GM12878 (cell line): ENCODE measurements at regions of chr1 and their contacts with region 1.

Region 1: DNA sequence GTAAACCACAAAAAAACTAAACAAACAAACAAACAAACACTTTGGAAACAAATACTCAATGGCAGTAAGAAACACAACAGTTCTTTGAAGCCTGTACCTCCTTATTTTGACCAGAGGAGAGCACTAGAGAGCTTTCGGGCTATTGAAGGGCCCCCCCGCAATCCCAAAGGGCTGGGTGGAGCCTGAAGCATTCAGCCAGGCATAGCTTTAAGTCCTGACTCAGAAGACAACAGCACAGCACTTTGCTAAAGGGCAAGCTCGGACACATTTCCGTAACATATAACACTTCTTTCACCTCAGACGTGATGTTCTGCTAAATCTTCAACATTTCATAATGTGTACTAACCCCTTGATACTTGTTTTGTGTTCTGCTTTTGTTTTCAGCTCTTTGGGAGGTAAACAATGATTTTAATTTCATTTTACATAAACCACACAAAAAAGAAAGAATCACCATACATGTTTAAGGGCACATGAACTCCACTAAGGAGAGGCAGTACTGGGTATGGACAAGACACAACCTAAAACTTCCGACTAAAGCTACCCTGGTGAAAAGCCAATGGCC is 9.7 kb upstream of the SHCBP1L start:
- DNase-seq: peak; percentile 62
- ATAC-seq: peak; percentile 100
- H3K4me3 ChIP-seq: peak overlapping the region; percentile 57; the same call in 1 of the 2 replicates
- H3K27ac ChIP-seq: peak overlapping the region; percentile 56
- H3K4me1 ChIP-seq: 0 out of 2 replicates have a peak, but pooled peaks cover 5% of the 10 kb centered on the region
- H3K27me3 ChIP-seq: no peaks in the 10 kb centered on the region
- CTCF ChIP-seq: peak; percentile 88 to 95 (median 93)
- EP300 ChIP-seq: no peak
- POLR2A ChIP-seq: peak; percentile 48; the same call in 1 of the 2 replicates
- RAD21 ChIP-seq: peak; percentile 99

Region 2: DNA sequence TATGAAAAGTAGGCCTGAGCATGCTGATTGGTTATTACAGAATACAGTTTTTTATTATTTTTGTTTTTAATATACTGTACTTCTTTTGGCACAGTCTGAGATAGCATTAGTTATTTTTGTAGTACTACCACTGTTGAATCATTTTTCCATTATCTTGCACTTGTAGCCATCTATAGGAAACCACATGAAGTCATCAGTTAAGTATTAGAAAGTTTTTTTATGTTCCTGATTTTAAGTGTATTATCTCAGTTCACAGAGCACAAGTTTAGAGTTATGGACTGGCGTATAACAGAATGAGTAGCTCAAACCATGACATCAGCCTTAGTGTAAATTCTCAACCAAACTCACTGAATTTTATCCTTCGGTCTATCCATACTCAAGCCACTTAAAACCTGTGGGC is 100.6 kb before region 1 on chr1:
- CTCF ChIA-PET with region 1: no interaction called
- POLR2A ChIA-PET with region 1: no interaction called
- RAD21 ChIA-PET with region 1: no interaction called
- SMC1A ChIA-PET with region 1: no interaction called
- in situ Hi-C with region 1: no loop called
- intact Hi-C with region 1: no loop called
- DNase-seq: no peak
- ATAC-seq: no peak
- H3K4me3 ChIP-seq: no peak overlapping the region
- H3K27ac ChIP-seq: no peak overlapping the region
- H3K4me1 ChIP-seq: no peaks in the 10 kb centered on the region
- H3K27me3 ChIP-seq: no peaks in the 10 kb centered on the region
- CTCF ChIP-seq: no peak
- EP300 ChIP-seq: no peak
- POLR2A ChIP-seq: no peak
- RAD21 ChIP-seq: no peak

Region 3: GRCh38 chr1:182905316-182905715 is 57.3 kb before region 1 on chr1:
- CTCF ChIA-PET with region 1: no interaction called
- POLR2A ChIA-PET with region 1: no interaction called
- RAD21 ChIA-PET with region 1: no interaction called
- SMC1A ChIA-PET with region 1: no interaction called
- in situ Hi-C with region 1: no loop called
- intact Hi-C with region 1: no loop called
- DNase-seq: no peak
- ATAC-seq: no peak
- H3K4me3 ChIP-seq: no peak overlapping the region
- H3K27ac ChIP-seq: no peak overlapping the region
- H3K4me1 ChIP-seq: no peaks in the 10 kb centered on the region
- H3K27me3 ChIP-seq: no peaks in the 10 kb centered on the region
- CTCF ChIP-seq: no peak
- EP300 ChIP-seq: no peak
- POLR2A ChIP-seq: no peak
- RAD21 ChIP-seq: no peak

Region 4: DNA sequence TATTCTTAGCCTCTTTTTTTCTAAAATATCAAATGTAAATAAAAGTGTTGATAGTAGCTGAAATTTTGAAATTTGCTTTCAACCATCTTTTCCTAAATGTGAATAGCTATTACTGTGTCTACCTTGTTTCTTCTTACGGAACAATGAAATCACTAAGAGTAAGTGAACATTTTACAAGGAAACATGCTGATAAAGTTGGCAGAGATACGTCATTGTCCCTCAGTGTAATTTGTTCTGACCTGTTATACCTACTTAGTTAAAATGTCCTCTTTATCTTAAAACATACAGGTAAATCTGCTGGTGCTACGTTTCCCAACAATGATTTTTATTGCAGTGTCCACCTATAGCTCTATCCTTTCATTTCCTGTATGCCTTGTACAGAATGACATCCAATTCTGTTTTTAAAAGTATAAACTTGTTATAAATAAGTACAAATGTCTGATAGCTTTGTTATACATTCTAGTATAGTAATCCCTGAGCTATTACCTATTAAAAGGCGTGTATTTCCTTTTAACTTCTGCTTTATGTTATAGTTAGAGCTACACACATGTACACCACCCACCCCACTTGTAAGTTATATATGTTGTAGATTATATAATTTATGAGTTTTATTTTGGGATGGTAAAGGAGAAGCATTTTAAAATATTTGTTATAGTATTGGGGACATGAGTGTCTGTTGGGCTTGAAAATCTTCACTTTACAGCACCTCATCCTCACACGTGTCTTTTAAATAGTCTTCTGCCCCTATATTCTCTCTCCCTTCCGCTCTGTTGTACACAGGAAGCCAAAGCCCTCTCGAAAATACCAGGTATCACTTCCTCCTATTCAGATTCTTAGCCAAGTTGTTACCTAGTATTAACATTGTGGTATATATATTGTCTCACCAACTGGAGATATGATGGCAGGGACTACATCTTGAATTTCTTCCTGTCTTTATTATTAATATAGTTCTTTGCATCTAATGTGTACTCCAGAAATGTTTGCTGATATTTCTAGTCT is 85.8 kb after region 1 on chr1:
- CTCF ChIA-PET with region 1: interaction called, 11 read pairs
- POLR2A ChIA-PET with region 1: no interaction called
- RAD21 ChIA-PET with region 1: interaction called, 5 read pairs
- SMC1A ChIA-PET with region 1: interaction called, 16 read pairs
- in situ Hi-C with region 1: no loop called
- intact Hi-C with region 1: no loop called
- DNase-seq: peak; percentile 78
- ATAC-seq: peak; percentile 98
- H3K4me3 ChIP-seq: no peak overlapping the region
- H3K27ac ChIP-seq: peak overlapping the region; percentile 46
- H3K4me1 ChIP-seq: peaks cover 29% of the 10 kb centered on the region
- H3K27me3 ChIP-seq: no peaks in the 10 kb centered on the region
- CTCF ChIP-seq: no peak
- EP300 ChIP-seq: peak in 1 of 2 experiments; percentile 61; a peak in 1 of 4 replicates
- POLR2A ChIP-seq: no peak
- RAD21 ChIP-seq: no peak

Region 5: GRCh38 chr1:183126528-183126927 is 163.9 kb after region 1 on chr1:
- CTCF ChIA-PET with region 1: no interaction called
- POLR2A ChIA-PET with region 1: no interaction called
- RAD21 ChIA-PET with region 1: interaction called, 3 read pairs
- SMC1A ChIA-PET with region 1: interaction called, 3 read pairs
- in situ Hi-C with region 1: no loop called
- intact Hi-C with region 1: loop called (anchors 5 kb)
- DNase-seq: no peak
- ATAC-seq: no peak
- H3K4me3 ChIP-seq: no peak overlapping the region
- H3K27ac ChIP-seq: no peak overlapping the region
- H3K4me1 ChIP-seq: no peaks in the 10 kb centered on the region
- H3K27me3 ChIP-seq: no peaks in the 10 kb centered on the region
- CTCF ChIP-seq: no peak
- EP300 ChIP-seq: no peak
- POLR2A ChIP-seq: no peak
- RAD21 ChIP-seq: no peak

Region 6: DNA sequence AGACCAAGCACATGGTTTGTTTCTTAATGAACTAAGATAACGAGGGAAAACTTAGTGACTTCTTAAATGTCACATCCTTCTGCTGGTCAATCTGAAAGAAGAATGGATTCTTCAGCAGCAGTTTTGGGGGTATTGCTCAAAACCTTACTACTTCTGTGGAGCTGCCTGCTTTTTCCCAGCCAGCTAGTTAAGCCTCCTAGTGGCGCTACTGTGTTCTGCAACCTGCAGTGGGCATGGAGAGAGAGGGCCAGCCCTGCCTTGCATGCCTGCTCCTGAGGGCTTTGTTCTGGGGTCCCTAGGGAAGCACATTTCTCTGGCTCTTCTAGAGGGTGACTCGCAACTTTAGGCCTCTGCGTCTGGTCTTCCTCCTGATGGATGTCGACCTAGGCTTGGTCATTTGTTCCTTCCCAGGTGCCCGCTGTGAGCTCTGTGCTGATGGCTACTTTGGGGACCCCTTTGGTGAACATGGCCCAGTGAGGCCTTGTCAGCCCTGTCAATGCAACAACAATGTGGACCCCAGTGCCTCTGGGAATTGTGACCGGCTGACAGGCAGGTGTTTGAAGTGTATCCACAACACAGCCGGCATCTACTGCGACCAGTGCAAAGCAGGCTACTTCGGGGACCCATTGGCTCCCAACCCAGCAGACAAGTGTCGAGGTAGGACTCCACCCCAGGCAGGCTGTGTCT is 265.5 kb after region 1 on chr1:
- CTCF ChIA-PET with region 1: interaction called, 126 read pairs
- POLR2A ChIA-PET with region 1: interaction called, 3 read pairs
- RAD21 ChIA-PET with region 1: interaction called, 52 read pairs
- SMC1A ChIA-PET with region 1: interaction called, 66 read pairs
- in situ Hi-C with region 1: loop called (anchors 5 kb)
- intact Hi-C with region 1: loop called (anchors 1 kb)
- DNase-seq: no peak
- ATAC-seq: peak; percentile 96
- H3K4me3 ChIP-seq: no peak overlapping the region
- H3K27ac ChIP-seq: no peak overlapping the region
- H3K4me1 ChIP-seq: peaks cover 6% of the 10 kb centered on the region; the same call in 1 of the 2 replicates
- H3K27me3 ChIP-seq: no peaks in the 10 kb centered on the region
- CTCF ChIP-seq: peak; percentile 80 to 90 (median 86)
- EP300 ChIP-seq: no peak
- POLR2A ChIP-seq: no peak
- RAD21 ChIP-seq: peak; percentile 87

Region 7: GRCh38 chr1:183306317-183307042 is 343.8 kb after region 1 on chr1:
- CTCF ChIA-PET with region 1: interaction called, 15 read pairs
- POLR2A ChIA-PET with region 1: no interaction called
- RAD21 ChIA-PET with region 1: interaction called, 7 read pairs
- SMC1A ChIA-PET with region 1: interaction called, 4 read pairs
- in situ Hi-C with region 1: no loop called
- intact Hi-C with region 1: no loop called
- DNase-seq: no peak
- ATAC-seq: peak; percentile 75
- H3K4me3 ChIP-seq: no peak overlapping the region
- H3K27ac ChIP-seq: no peak overlapping the region
- H3K4me1 ChIP-seq: peaks cover 12% of the 10 kb centered on the region
- H3K27me3 ChIP-seq: no peaks in the 10 kb centered on the region
- CTCF ChIP-seq: peak; percentile 38 to 48 (median 48); a peak in 5 of 6 replicates
- EP300 ChIP-seq: no peak
- POLR2A ChIP-seq: no peak
- RAD21 ChIP-seq: 0 out of 2 replicates have a peak, but pooled peaks have one; percentile 6

Region 8: GRCh38 chr1:183543619-183544204 is 581.1 kb after region 1 on chr1:
- CTCF ChIA-PET with region 1: interaction called, 3 read pairs
- POLR2A ChIA-PET with region 1: no interaction called
- RAD21 ChIA-PET with region 1: no interaction called
- SMC1A ChIA-PET with region 1: no interaction called
- in situ Hi-C with region 1: no loop called
- intact Hi-C with region 1: loop called (anchors 10 kb)
- DNase-seq: peak; percentile 19
- ATAC-seq: peak; percentile 95
- H3K4me3 ChIP-seq: no peak overlapping the region
- H3K27ac ChIP-seq: no peak overlapping the region
- H3K4me1 ChIP-seq: no peaks in the 10 kb centered on the region
- H3K27me3 ChIP-seq: no peaks in the 10 kb centered on the region
- CTCF ChIP-seq: peak; percentile 65 to 66 (median 65)
- EP300 ChIP-seq: no peak
- POLR2A ChIP-seq: no peak
- RAD21 ChIP-seq: peak; percentile 71